IMR-90 (cell line): ENCODE measurements at regions of chr3 and their contacts with region 1.

Region 1: DNA sequence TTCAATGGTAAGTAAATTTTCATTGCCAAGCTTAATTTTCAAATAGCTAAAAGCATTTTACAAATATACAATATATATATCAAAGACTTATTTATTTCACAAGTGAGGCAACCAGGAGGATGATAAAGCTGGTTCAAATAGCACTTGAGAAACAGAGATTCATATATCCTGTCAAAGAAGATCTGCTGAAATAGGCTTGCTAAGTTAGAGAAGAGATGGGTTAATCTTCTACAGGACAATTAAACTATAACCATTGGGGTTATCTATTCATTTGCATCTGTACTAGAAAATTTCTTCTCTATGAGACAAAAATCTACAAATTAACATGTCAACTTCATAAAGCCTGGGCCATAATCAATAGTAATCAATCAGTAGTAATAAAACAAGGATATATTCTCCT is 637.7 kb upstream of the UBE2E2 start:
- DNase-seq: no peak
- ATAC-seq: no peak
- H3K4me3 ChIP-seq: no peak overlapping the region
- H3K27ac ChIP-seq: no peak overlapping the region
- H3K4me1 ChIP-seq: no peaks in the 10 kb centered on the region
- H3K27me3 ChIP-seq: no peaks in the 10 kb centered on the region
- CTCF ChIP-seq: no peak
- POLR2A ChIP-seq: no peak
- RAD21 ChIP-seq: no peak

Region 2: DNA sequence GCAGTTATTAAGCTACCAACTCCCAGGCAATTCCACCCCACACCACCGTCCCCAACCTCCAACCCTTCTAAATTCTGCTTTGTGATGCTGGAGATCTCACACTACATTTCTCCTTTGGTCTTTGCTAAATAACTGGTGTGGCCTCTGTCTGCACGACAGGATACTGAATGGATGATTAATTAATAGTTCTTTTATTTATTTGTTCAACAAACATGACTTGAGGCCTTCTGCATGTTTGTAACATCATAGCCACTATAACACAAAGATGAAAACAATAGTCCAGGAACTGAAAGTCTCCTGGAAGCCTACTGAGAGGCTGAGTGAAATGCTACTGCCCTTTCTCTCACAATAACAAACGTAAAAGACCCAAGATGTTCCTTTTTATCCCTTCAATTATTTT is 28.2 kb after region 1 on chr3:
- CTCF ChIA-PET with region 1: no interaction called
- POLR2A ChIA-PET with region 1: no interaction called
- dilution Hi-C with region 1: no loop called
- in situ Hi-C with region 1: no loop called
- intact Hi-C with region 1: no loop called
- DNase-seq: no peak
- ATAC-seq: no peak
- H3K4me3 ChIP-seq: no peak overlapping the region
- H3K27ac ChIP-seq: no peak overlapping the region
- H3K4me1 ChIP-seq: no peaks in the 10 kb centered on the region
- H3K27me3 ChIP-seq: no peaks in the 10 kb centered on the region
- CTCF ChIP-seq: no peak
- POLR2A ChIP-seq: no peak
- RAD21 ChIP-seq: no peak

Region 3: DNA sequence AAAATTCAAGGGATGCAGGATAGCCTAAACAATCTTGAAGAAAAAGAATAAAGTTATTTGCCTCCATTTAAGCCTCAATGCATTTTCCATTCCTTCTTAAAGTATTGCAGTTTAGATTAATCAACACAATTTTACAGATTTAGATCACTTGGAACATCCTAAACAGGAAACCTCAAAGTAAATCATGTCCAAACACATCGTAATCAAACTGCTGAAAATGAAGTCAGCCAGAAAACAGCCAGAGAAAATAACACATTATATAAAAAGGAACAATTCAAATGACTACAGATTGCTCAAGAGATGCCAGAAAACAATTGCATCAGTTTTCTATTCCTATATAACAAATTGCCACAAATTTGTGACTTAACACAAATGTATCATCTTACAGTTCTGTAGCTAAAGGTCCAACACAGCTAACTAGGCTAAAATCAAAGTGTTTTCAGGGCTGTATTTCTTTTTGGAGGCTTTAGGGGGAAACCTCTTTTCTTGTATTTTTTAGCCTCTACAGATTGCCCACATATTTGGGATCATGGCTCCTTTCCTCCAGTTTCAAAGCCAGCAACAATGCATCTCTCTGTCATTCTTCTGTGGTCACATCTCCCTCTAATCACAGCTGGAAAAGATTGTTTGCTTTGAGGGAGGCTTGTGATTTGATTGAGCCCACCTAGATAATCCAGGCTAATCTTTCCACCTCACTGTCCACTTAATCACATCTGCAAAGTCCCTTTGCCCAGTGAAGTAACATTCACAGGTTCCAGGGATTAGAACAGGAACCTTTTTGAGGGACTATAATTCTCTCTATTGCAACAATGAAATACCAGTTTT is 94.5 kb after region 1 on chr3:
- CTCF ChIA-PET with region 1: no interaction called
- POLR2A ChIA-PET with region 1: no interaction called
- dilution Hi-C with region 1: no loop called
- in situ Hi-C with region 1: no loop called
- intact Hi-C with region 1: no loop called
- DNase-seq: no peak
- ATAC-seq: no peak
- H3K4me3 ChIP-seq: no peak overlapping the region
- H3K27ac ChIP-seq: no peak overlapping the region
- H3K4me1 ChIP-seq: no peaks in the 10 kb centered on the region
- H3K27me3 ChIP-seq: no peaks in the 10 kb centered on the region
- CTCF ChIP-seq: no peak
- POLR2A ChIP-seq: no peak
- RAD21 ChIP-seq: no peak

Region 4: DNA sequence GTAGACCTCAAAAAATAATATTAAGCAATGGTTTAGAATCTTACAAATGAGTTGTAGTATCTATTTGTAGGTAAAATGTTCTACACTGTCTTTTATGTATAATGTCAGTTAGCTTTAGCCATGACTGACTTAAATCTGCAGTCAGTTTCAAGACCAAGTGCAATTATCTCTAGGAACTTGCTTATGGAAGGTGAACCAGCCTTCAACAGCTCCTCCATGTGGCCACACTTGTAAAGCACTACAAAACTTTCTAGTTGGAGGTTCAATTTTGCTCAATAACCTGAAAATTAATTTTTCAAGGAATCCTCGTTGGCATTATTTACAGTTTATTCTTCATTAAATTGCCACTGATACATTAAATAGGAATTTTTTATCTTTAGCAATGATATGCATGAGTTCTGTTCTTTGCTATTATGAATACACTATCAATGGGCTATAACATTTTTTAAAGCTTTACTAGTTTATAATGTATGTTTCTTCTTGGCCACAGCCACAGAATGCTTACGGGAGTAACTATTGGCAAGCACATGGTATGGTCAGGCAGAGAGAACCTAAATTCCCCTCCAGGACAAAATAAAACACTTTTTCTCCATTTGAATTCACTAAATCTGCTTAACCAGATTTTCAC is 322.4 kb after region 1 on chr3:
- CTCF ChIA-PET with region 1: no interaction called
- POLR2A ChIA-PET with region 1: no interaction called
- dilution Hi-C with region 1: no loop called
- in situ Hi-C with region 1: no loop called
- intact Hi-C with region 1: loop called (anchors 1 kb)
- DNase-seq: peak; percentile 21
- ATAC-seq: no peak
- H3K4me3 ChIP-seq: no peak overlapping the region
- H3K27ac ChIP-seq: no peak overlapping the region
- H3K4me1 ChIP-seq: no peaks in the 10 kb centered on the region
- H3K27me3 ChIP-seq: no peaks in the 10 kb centered on the region
- CTCF ChIP-seq: peak; percentile 29; the same call in 1 of the 2 replicates
- POLR2A ChIP-seq: no peak
- RAD21 ChIP-seq: no peak